Heart right ventricle (tissue), 16 donors: ENCODE measurements at regions of chr12 and their contacts with region 1.

Region 1: GRCh38 chr12:119176267-119176849 is 2.4 kb upstream of the HSPB8 start:
- DNase-seq: peak; percentile 86 to 94
- ATAC-seq: peak; percentile 38 to 74 (median 69)
- H3K4me3 ChIP-seq: peak overlapping the region; percentile 15 to 61 (median 48)
- H3K27ac ChIP-seq: peak overlapping the region; percentile 35 to 99 (median 86)
- H3K4me1 ChIP-seq: peaks cover 0 to 49% (median 22%) of the 10 kb centered on the region in 9 donors
- H3K27me3 ChIP-seq: peaks cover 0 to 13% (median 0%) of the 10 kb centered on the region in 7 donors
- CTCF ChIP-seq: no peak

Region 2: GRCh38 chr12:118908811-118909210 is 267.5 kb before region 1 on chr12:
- intact Hi-C with region 1: no loop called
- DNase-seq: no peak
- ATAC-seq: no peak
- H3K4me3 ChIP-seq: no peak overlapping the region
- H3K27ac ChIP-seq: no peak overlapping the region
- H3K4me1 ChIP-seq: no peaks in the 10 kb centered on the region
- H3K27me3 ChIP-seq: peaks cover 0 to 60% (median 4%) of the 10 kb centered on the region in 7 donors
- CTCF ChIP-seq: no peak

Region 3: DNA sequence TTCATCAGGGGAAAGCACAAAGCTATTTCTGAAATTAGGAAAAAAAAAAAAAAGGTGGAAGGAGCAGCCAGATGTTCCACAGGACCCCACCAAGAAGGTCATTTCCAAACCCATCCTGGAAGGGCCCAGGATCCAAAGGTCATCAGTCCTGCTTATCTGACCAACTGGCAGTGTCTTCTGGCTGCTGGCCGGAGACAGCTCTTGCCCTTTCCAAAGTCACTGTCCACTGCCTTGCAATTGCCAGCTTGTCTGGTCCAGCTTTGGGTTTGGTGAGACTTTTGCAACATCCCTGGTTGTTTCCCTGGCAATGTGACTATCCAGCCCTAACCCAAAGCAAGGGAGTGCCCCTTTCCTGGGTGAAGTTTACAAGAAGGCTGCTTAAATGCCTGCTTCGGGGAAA is 16.5 kb before region 1 on chr12:
- intact Hi-C with region 1: loop called in 1 of 10 experiments (anchors 1 kb)
- DNase-seq: no peak
- ATAC-seq: no peak
- H3K4me3 ChIP-seq: no peak overlapping the region
- H3K27ac ChIP-seq: peak overlapping the region in 3 of 10 donors; percentile 44 to 88 (median 86)
- H3K4me1 ChIP-seq: peaks cover 0 to 48% (median 12%) of the 10 kb centered on the region in 9 donors
- H3K27me3 ChIP-seq: no peaks in the 10 kb centered on the region
- CTCF ChIP-seq: no peak

Region 4: DNA sequence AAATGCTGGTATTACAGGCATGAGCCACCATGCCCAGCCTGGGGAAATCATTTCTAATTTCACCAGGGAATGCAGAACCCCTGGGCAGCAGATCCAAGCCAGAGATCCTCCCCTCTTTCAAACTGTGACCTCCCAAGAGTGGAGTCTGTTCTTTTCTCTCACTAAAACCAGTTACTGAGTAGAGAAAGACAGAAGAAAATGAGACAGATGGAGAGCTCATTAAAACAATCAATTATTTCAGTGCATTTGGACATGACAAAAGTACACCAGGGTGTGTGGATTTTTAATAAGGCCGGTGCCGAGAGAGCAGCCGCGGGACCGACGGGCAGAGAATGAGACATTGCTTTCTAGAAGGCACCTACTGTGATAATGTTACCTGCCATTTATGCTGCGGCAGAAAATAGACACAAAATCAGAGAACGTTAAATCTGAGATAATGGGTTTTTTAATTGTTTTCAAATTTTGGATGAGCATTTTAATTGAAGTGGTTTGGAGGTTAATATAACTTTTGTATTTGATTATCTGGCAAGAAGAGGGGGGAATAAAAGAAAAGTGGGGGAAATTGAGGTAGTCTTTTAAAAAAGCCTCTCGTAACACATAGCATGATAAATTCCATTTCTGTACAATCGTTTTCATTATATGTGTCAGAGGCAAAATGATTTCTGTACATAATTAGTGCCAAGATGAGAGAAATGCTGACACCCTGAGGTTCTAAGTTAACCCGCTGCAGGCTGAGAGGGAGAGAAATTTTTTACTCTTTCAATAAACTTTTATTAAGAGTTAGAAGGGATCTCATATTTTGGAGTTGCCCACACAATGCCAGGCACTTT is 73.2 kb after region 1 on chr12:
- intact Hi-C with region 1: loop called in 2 of 10 experiments (anchors 5 to 10 kb)
- DNase-seq: no peak
- ATAC-seq: no peak
- H3K4me3 ChIP-seq: no peak overlapping the region
- H3K27ac ChIP-seq: peak overlapping the region in 6 of 10 donors; percentile 41 to 63 (median 52)
- H3K4me1 ChIP-seq: peaks cover 2 to 31% (median 15%) of the 10 kb centered on the region in 9 donors
- H3K27me3 ChIP-seq: no peaks in the 10 kb centered on the region
- CTCF ChIP-seq: peak in 1 of 9 donors; percentile 7

Region 5: GRCh38 chr12:119274636-119275065 is 98.3 kb after region 1 on chr12:
- intact Hi-C with region 1: loop called in 1 of 10 experiments (anchors 10 kb)
- DNase-seq: no peak
- ATAC-seq: peak; percentile 52 to 95 (median 84)
- H3K4me3 ChIP-seq: no peak overlapping the region
- H3K27ac ChIP-seq: no peak overlapping the region
- H3K4me1 ChIP-seq: peaks cover 0 to 18% (median 3%) of the 10 kb centered on the region in 9 donors
- H3K27me3 ChIP-seq: no peaks in the 10 kb centered on the region
- CTCF ChIP-seq: peak in 8 of 9 donors; percentile 5 to 52 (median 30)

Region 6: DNA sequence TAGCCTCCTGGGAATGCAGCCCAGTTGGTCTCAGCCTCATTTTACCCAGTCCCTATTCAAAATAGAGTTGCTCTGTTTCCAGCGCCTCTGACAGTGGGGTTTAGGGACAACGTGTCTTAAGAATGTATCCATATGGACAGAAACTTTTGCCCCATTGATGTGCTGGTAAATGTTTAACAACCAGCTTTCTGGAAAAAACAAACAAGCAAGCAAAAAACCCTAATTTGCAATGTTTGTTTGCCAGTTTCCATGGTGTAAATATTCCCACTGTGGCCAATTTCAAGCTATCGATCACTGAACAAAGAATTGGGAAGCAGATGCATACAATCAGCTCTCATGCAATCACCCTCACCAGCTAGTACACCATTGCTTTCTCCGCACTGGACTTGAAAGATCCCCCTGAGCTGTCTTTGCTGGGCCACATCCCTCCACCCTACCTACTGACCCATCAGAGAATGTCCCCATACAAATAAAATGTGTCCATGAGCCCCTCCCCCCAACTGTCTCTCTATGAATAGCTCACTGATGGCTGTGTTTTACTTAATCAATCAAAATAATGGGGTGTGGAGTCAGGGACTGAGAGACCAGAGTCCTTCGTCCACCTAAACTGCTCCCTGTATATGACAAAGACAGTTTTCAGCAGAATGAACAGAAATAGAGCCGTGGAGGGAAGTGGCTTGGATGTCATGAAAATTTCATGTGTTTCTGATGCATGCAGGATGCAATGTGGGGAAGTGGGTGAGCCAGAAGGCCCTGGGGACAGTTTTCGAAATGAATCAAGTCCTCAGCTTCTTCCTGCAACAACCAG is 198.9 kb after region 1 on chr12:
- intact Hi-C with region 1: loop called in 1 of 10 experiments (anchors 10 kb)
- DNase-seq: no peak
- ATAC-seq: peak in 4 of 8 donors; percentile 38 to 48 (median 44)
- H3K4me3 ChIP-seq: no peak overlapping the region
- H3K27ac ChIP-seq: peak overlapping the region in 8 of 10 donors; percentile 19 to 75 (median 62)
- H3K4me1 ChIP-seq: peaks cover 0 to 64% (median 26%) of the 10 kb centered on the region in 9 donors
- H3K27me3 ChIP-seq: no peaks in the 10 kb centered on the region
- CTCF ChIP-seq: no peak